Activated naive CD4-positive, alpha-beta T cell treated with anti-CD3 and anti-CD28 coated beads, Interleukin-2, amount 10 ng/mL, durations not matched to agents 7 days and 5 days (primary cell): ENCODE measurements at regions of chr7 and their contacts with region 1.

Region 1: GRCh38 chr7:102412548-102412947 is 16.4 kb downstream of the PRKRIP1 start:
- DNase-seq: peak; percentile 70
- H3K4me3 Mint-ChIP-seq: no peak overlapping the region
- H3K27ac Mint-ChIP-seq: no peak overlapping the region
- H3K4me1 Mint-ChIP-seq: peaks cover 46% of the 10 kb centered on the region
- H3K27me3 Mint-ChIP-seq: no peaks in the 10 kb centered on the region

Region 2: GRCh38 chr7:102425639-102426267 is 13.2 kb after region 1 on chr7:
- CTCF ChIA-PET with region 1: interaction called, 34 read pairs
- DNase-seq: peak; percentile 87
- H3K4me3 Mint-ChIP-seq: peak overlapping the region; percentile 73
- H3K27ac Mint-ChIP-seq: peak overlapping the region; percentile 100
- H3K4me1 Mint-ChIP-seq: peaks cover 82% of the 10 kb centered on the region
- H3K27me3 Mint-ChIP-seq: no peaks in the 10 kb centered on the region

Region 3: GRCh38 chr7:102433219-102434038 is 20.9 kb after region 1 on chr7 and contains the start of gene ORAI2:
- CTCF ChIA-PET with region 1: interaction called, 27 read pairs
- DNase-seq: peak; percentile 89
- H3K4me3 Mint-ChIP-seq: peak within 1 kb of the TSS; percentile 87
- H3K27ac Mint-ChIP-seq: peak within 1 kb of the TSS; percentile 98
- H3K4me1 Mint-ChIP-seq: peaks cover 72% of the 10 kb centered on the region
- H3K27me3 Mint-ChIP-seq: no peaks in the 10 kb centered on the region

Region 4: GRCh38 chr7:102440078-102440795 is 27.7 kb after region 1 on chr7:
- CTCF ChIA-PET with region 1: interaction called, 27 read pairs
- DNase-seq: no peak
- H3K4me3 Mint-ChIP-seq: no peak overlapping the region
- H3K27ac Mint-ChIP-seq: no peak overlapping the region
- H3K4me1 Mint-ChIP-seq: peaks cover 22% of the 10 kb centered on the region
- H3K27me3 Mint-ChIP-seq: no peaks in the 10 kb centered on the region

Region 5: GRCh38 chr7:102450242-102450641 is 37.7 kb after region 1 on chr7:
- CTCF ChIA-PET with region 1: interaction called, 23 read pairs
- DNase-seq: peak; percentile 61
- H3K4me3 Mint-ChIP-seq: no peak overlapping the region
- H3K27ac Mint-ChIP-seq: no peak overlapping the region
- H3K4me1 Mint-ChIP-seq: no peaks in the 10 kb centered on the region
- H3K27me3 Mint-ChIP-seq: no peaks in the 10 kb centered on the region

Region 6: DNA sequence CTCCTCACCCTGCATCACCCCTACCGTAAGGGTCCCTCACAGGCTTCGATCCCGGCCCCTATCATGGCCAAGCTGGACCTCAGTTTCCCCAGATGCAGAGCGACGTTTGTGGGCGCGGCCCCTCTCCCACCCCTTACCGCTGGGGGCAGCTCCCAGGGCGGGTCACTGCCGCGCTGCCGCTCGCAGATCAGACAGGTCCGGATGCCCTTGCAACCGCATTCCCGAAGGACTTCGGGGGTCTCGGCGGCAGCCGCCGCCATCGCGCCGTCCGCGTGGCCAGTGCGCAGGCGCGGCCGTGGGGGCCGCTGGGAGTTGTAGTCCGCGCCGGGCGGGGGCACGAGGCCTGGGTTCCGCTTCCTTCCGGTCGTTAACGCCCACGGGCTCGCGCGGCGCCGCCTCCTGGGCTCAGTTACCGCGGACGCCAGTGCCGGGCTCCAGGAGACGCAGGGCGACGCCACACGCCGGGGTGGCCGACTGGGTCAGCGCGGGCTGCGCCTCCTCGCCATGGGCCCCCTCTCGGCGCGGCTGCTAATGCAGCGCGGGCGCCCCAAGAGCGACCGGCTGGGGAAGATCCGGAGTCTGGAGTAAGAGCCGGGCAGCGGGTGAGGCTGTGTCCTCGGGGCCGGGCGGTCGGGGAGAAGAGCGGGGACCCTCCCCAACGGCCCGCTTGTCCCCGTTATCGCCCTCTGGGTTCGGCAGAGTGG is 52.2 kb after region 1 on chr7 and contains the starts of genes ALKBH4 and LRWD1:
- CTCF ChIA-PET with region 1: interaction called, 13 read pairs
- DNase-seq: peak; percentile 95
- H3K4me3 Mint-ChIP-seq: peak within 1 kb of the TSS; percentile 95
- H3K27ac Mint-ChIP-seq: peak within 1 kb of the TSS; percentile 47
- H3K4me1 Mint-ChIP-seq: peaks cover 35% of the 10 kb centered on the region
- H3K27me3 Mint-ChIP-seq: no peaks in the 10 kb centered on the region